ENCODE measurements at regions of chr5 and their contacts with region 1.

Region 1: GRCh38 chr5:111211341-111211740 is 12.8 kb upstream of the CAMK4 start:
- DNase-seq: no peak
- H3K4me3 Mint-ChIP-seq: peak overlapping the region; percentile 32
- H3K27ac Mint-ChIP-seq: no peak overlapping the region
- H3K4me1 Mint-ChIP-seq: peaks cover 27% of the 10 kb centered on the region
- H3K27me3 Mint-ChIP-seq: peaks cover 6% of the 10 kb centered on the region

Region 2: DNA sequence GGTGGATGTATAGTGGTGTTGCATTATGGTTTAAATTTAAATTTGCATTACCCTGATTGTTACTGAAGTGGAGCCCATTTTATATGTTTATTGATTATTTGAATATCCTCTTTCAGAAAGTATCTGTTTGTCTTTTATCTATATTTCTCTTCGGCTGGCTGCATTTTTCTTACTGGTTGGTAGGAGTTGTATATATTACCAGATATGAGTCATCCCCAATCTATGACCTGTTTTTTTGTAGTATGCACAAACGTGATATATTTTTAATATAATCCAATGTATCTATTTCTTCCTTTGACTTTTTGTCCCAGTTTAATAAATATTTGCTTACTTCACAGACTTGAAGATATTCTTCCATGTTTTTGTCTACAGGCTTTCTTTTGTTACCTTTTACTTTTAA is 16.4 kb before region 1 on chr5:
- intact Hi-C with region 1: no loop called
- DNase-seq: no peak
- H3K4me3 Mint-ChIP-seq: no peak overlapping the region
- H3K27ac Mint-ChIP-seq: no peak overlapping the region
- H3K4me1 Mint-ChIP-seq: peaks cover 2% of the 10 kb centered on the region
- H3K27me3 Mint-ChIP-seq: peaks cover 34% of the 10 kb centered on the region

Region 3: GRCh38 chr5:111223889-111224563 is 12.7 kb after region 1 on chr5 and contains the start of gene CAMK4:
- intact Hi-C with region 1: loop called (anchors 1 kb)
- DNase-seq: peak; percentile 94
- H3K4me3 Mint-ChIP-seq: peak within 1 kb of the TSS; percentile 97
- H3K27ac Mint-ChIP-seq: peak within 1 kb of the TSS; percentile 95
- H3K4me1 Mint-ChIP-seq: peaks cover 35% of the 10 kb centered on the region
- H3K27me3 Mint-ChIP-seq: peaks cover 2% of the 10 kb centered on the region
- total RNA-seq, gene CAMK4: 47.7 and 49.5 TPM in 2 replicates

Region 4: GRCh38 chr5:111229871-111230810 is 18.8 kb after region 1 on chr5:
- intact Hi-C with region 1: loop called (anchors 1 kb)
- DNase-seq: peak; percentile 75
- H3K4me3 Mint-ChIP-seq: peak overlapping the region; percentile 86
- H3K27ac Mint-ChIP-seq: peak overlapping the region; percentile 98
- H3K4me1 Mint-ChIP-seq: peaks cover 74% of the 10 kb centered on the region
- H3K27me3 Mint-ChIP-seq: no peaks in the 10 kb centered on the region

Measured in activated CD4-positive, alpha-beta T cell treated with anti-CD3 and anti-CD28 coated beads, Interleukin-2, amount 10 ng/mL, durations not matched to agents 24 days and 14 days (primary cell).